Cardiac septum (tissue), 1 donor: ENCODE measurements at regions of chr22 and their contacts with region 1.

Region 1: GRCh38 chr22:24951942-24952836 is at the start of gene KIAA1671:
- DNase-seq: peak; percentile 91
- total RNA-seq, gene KIAA1671: 12.3 TPM

Region 2: DNA sequence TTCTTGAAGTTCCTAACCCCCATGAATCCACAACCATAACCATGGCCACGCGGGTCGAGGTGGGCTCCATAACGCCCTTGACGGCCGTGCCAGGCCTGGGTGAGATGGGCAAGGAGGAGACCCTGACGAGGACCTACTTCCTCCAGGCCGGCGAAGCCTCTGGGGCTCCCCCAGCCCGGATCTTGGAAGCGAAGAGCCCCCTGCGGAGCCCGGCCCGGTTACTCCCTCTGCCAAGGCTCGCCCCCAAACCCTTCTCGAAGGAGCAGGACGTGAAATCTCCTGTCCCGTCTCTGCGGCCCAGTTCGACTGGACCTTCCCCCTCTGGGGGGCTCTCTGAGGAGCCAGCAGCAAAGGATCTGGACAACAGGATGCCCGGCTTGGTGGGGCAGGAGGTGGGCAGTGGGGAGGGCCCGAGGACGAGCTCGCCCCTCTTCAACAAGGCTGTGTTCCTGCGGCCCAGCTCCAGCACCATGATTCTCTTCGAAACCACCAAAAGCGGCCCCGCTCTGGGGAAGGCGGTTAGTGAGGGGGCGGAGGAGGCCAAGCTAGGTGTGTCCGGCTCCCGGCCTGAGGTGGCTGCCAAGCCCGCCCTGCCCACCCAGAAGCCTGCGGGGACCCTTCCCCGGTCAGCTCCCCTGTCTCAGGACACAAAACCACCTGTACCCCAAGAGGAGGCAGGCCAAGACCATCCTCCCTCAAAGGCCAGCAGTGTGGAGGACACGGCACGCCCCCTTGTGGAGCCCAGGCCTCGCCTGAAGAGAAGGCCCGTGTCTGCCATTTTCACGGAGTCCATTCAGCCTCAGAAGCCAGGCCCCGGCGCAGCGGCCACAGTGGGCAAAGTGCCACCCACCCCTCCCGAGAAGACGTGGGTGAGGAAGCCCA is 76.0 kb after region 1 on chr22:
- intact Hi-C with region 1: loop called (anchors 5 kb)
- DNase-seq: no peak

Region 3: GRCh38 chr22:25048659-25049647 is 96.8 kb after region 1 on chr22:
- intact Hi-C with region 1: loop called (anchors 1 kb)
- DNase-seq: no peak